ENCODE measurements at regions of chr11 and their contacts with region 1.

Region 1: DNA sequence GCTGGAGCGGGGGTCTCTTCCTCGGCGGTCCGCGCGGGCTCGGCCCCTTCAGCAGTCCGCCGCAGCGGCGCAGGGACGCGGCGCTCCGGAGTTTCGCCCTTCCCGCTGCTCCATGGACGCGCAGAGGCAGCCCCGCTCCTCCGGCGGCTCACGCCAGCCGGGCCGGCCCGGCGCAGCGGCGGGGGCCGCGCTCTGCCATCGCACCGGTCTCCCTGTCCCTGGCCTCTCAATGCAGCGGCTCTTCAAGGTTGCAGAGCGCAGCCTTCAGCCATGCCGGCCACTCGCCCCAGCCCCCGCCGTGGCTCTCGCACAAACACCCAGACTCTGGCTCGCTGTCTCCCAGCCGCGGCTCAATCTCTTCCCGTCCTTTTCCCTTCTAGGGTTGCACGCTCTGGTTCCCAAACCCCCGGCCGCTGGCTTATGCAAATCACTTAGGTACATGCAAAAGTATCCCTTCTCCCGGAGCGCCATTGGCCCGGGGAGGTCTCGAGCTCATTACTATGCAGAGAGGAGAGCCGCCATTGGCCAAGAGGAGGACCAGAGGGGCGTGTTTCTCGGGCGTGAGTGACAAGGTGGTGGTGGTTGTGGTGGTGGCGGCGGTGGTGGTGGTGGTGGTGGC is at the start of gene LGR4:
- DNase-seq: peak; percentile 69
- ATAC-seq: peak; percentile 85
- H3K4me3 Mint-ChIP-seq: peak within 1 kb of the TSS; percentile 87
- H3K27ac Mint-ChIP-seq: no peak within 1 kb of the TSS
- H3K4me1 Mint-ChIP-seq: peaks cover 13% of the 10 kb centered on the region
- H3K27me3 Mint-ChIP-seq: peaks cover 20% of the 10 kb centered on the region
- CTCF ChIP-seq: no peak
- total RNA-seq, gene LGR4: 0.09 TPM in 1 of 2 experiments, not detected in the other

Region 2: GRCh38 chr11:27362749-27363575 is 109.5 kb before region 1 on chr11 and contains the start of gene CCDC34:
- CTCF ChIA-PET with region 1: no interaction called
- POLR2A ChIA-PET with region 1: no interaction called
- intact Hi-C with region 1: loop called (anchors 10 kb)
- DNase-seq: peak; percentile 91
- ATAC-seq: peak; percentile 98
- H3K4me3 Mint-ChIP-seq: peak within 1 kb of the TSS; percentile 87
- H3K27ac Mint-ChIP-seq: peak within 1 kb of the TSS; percentile 90
- H3K4me1 Mint-ChIP-seq: peaks cover 34% of the 10 kb centered on the region
- H3K27me3 Mint-ChIP-seq: no peaks in the 10 kb centered on the region
- CTCF ChIP-seq: no peak
- total RNA-seq, gene CCDC34: 26.8 to 28.5 TPM

Region 3: DNA sequence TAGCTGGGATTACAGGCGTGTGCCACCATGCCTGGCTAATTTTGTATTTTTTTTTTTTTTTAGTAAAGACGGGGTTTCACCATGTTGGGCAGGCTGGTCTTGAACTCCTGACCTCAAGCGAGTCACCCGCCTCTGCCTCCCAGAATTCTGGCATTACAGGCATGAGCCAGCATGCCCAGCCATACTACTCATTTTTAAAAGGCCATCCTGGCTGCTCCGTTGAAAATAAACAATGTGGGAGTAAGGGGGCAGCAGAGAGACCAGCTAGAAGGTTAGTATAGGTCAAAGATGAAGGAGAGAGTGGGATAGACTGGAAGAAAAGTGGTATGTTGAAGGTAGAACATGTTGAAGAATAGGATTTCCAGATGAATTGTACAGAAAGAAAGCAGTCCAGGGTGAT is 51.6 kb after region 1 on chr11:
- CTCF ChIA-PET with region 1: no interaction called
- POLR2A ChIA-PET with region 1: no interaction called
- intact Hi-C with region 1: no loop called
- DNase-seq: no peak
- ATAC-seq: no peak
- H3K4me3 Mint-ChIP-seq: no peak overlapping the region
- H3K27ac Mint-ChIP-seq: no peak overlapping the region
- H3K4me1 Mint-ChIP-seq: no peaks in the 10 kb centered on the region
- H3K27me3 Mint-ChIP-seq: no peaks in the 10 kb centered on the region
- CTCF ChIP-seq: no peak